Endothelial cell of umbilical vein (primary cell): ENCODE measurements at regions of chr5 and their contacts with region 1.

Region 1: DNA sequence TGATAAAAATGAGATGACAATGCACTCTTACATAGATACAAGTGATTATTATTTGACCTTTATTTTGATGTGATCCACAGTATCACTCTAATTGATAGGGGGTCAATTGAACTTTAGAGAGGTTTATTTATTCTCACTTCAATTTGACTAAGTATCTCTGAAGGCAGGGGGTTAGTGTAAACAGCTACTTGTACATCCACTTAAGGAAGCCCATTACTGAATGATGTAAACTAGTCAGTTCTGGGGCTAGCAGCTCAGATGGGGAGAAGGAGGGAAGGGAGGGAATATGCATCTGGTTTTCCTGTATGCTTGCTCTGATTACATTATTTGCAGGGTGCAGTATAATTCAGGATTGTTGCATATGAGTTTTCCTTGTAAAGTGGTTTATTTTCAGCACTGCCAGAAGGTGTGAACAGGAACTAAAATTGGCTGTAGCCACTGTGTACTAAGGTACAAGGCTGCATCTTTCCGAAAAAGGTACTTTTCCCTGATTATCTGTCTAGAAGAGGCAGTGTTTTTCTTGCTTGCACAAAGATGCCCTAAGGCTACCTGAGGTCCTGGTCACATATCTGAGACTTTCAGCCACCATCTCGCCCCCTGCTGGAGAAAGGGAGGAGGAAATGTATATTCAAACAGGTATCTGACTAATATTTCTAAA is 51.2 kb downstream of the MRPS27 start:
- DNase-seq: peak; percentile 70
- H3K4me3 ChIP-seq: no peak overlapping the region
- H3K27ac ChIP-seq: no peak overlapping the region
- H3K4me1 ChIP-seq: peaks cover 2% of the 10 kb centered on the region
- H3K27me3 ChIP-seq: no peaks in the 10 kb centered on the region
- CTCF ChIP-seq: peak; percentile 60 to 67
- POLR2A ChIP-seq: no peak

Region 2: GRCh38 chr5:72138943-72139521 is 129.8 kb before region 1 on chr5:
- CTCF ChIA-PET with region 1: interaction called, 5 read pairs
- POLR2A ChIA-PET with region 1: no interaction called
- dilution Hi-C with region 1: no loop called
- intact Hi-C with region 1: loop called (anchors 5 kb)
- DNase-seq: no peak
- H3K4me3 ChIP-seq: no peak overlapping the region
- H3K27ac ChIP-seq: peak overlapping the region; percentile 24
- H3K4me1 ChIP-seq: peaks cover 73% of the 10 kb centered on the region
- H3K27me3 ChIP-seq: no peaks in the 10 kb centered on the region
- CTCF ChIP-seq: no peak
- POLR2A ChIP-seq: no peak

Region 3: GRCh38 chr5:72210888-72211678 is 57.8 kb before region 1 on chr5:
- CTCF ChIA-PET with region 1: interaction called, 5 read pairs
- POLR2A ChIA-PET with region 1: no interaction called
- dilution Hi-C with region 1: no loop called
- intact Hi-C with region 1: loop called (anchors 2 kb)
- DNase-seq: peak; percentile 93
- H3K4me3 ChIP-seq: peak overlapping the region in 1 of 3 experiments; percentile 26
- H3K27ac ChIP-seq: peak overlapping the region; percentile 97
- H3K4me1 ChIP-seq: peaks cover 38% of the 10 kb centered on the region
- H3K27me3 ChIP-seq: no peaks in the 10 kb centered on the region
- CTCF ChIP-seq: no peak
- POLR2A ChIP-seq: peak; percentile 31